Calu3 (cell line): ENCODE measurements at regions of chr19 and their contacts with region 1.

Region 1: GRCh38 chr19:46924874-46925547 is 64.2 kb downstream of the ARHGAP35 start:
- DNase-seq: peak; percentile 50
- H3K4me3 Mint-ChIP-seq: peak overlapping the region; percentile 67
- H3K27ac Mint-ChIP-seq: peak overlapping the region; percentile 91
- H3K4me1 Mint-ChIP-seq: peaks cover 45% of the 10 kb centered on the region
- H3K27me3 Mint-ChIP-seq: no peaks in the 10 kb centered on the region
- CTCF ChIP-seq: no peak

Region 2: DNA sequence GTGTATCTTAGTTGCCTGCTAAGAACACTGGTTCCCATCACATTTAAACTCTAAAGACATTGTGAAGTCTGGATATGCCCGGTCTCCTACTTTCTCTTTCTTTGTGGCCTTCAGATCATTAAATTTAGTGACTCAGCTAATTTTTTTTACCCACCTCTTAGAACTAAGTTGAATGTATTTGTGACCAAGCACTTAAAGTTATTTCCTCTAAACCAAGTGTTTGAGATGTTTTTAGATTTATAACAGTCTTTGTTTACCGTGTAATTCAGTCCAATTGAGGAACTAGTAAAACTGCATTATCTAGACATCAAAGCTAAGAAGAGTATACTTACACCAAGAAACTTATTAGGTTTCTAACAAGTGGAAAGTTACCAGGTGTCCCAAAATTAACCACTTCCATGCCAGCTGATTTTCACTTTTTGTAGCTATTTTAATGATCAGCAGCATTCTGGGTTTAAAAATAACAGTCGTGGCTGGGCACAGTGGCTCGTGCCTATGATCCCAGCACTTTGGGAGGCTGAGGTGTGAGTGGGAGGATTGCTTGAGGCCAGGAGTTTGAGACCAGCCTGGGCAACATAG is 11.1 kb before region 1 on chr19:
- CTCF ChIA-PET with region 1: interaction called, 16 read pairs
- intact Hi-C with region 1: no loop called
- DNase-seq: no peak
- H3K4me3 Mint-ChIP-seq: peak overlapping the region; percentile 42
- H3K27ac Mint-ChIP-seq: peak overlapping the region; percentile 62
- H3K4me1 Mint-ChIP-seq: peaks cover 33% of the 10 kb centered on the region
- H3K27me3 Mint-ChIP-seq: no peaks in the 10 kb centered on the region
- CTCF ChIP-seq: no peak

Region 3: GRCh38 chr19:46975925-46976782 is 51.1 kb after region 1 on chr19:
- CTCF ChIA-PET with region 1: interaction called, 6 read pairs
- intact Hi-C with region 1: loop called (anchors 5 kb)
- DNase-seq: peak; percentile 73
- H3K4me3 Mint-ChIP-seq: peak overlapping the region; percentile 4
- H3K27ac Mint-ChIP-seq: peak overlapping the region; percentile 21
- H3K4me1 Mint-ChIP-seq: peaks cover 33% of the 10 kb centered on the region
- H3K27me3 Mint-ChIP-seq: no peaks in the 10 kb centered on the region
- CTCF ChIP-seq: no peak